CD4-positive, alpha-beta T cell (primary cell): ENCODE measurements at regions of chr17 and their contacts with region 1.

Region 1: GRCh38 chr17:77957857-77958715 is at the start of gene TNRC6C:
- DNase-seq: peak; percentile 99 to 100 (median 100)
- ATAC-seq: peak; percentile 85
- H3K4me3 ChIP-seq: peak within 1 kb of the TSS; percentile 95
- H3K4me3 Mint-ChIP-seq: peak within 1 kb of the TSS; percentile 96
- H3K27ac ChIP-seq: peak within 1 kb of the TSS; percentile 44 to 76
- H3K27ac Mint-ChIP-seq: peak within 1 kb of the TSS; percentile 94
- H3K4me1 ChIP-seq: peaks cover 36% of the 10 kb centered on the region
- H3K4me1 Mint-ChIP-seq: peaks cover 44% of the 10 kb centered on the region
- H3K27me3 ChIP-seq: no peaks in the 10 kb centered on the region
- H3K27me3 Mint-ChIP-seq: no peaks in the 10 kb centered on the region
- CTCF ChIP-seq: no peak
- total RNA-seq, gene TNRC6C: 50.7 to 57.3 TPM

Region 2: GRCh38 chr17:77280980-77281903 is 676.8 kb before region 1 on chr17:
- CTCF ChIA-PET with region 1: no interaction called
- POLR2A ChIA-PET with region 1: no interaction called
- intact Hi-C with region 1: loop called in 1 of 2 experiments (anchors 5 kb)
- DNase-seq: peak; percentile 32 to 89 (median 60)
- ATAC-seq: peak; percentile 92
- H3K4me3 ChIP-seq: peak overlapping the region; percentile 44
- H3K4me3 Mint-ChIP-seq: peak overlapping the region; percentile 88
- H3K27ac ChIP-seq: no peak overlapping the region
- H3K27ac Mint-ChIP-seq: peak overlapping the region; percentile 88
- H3K4me1 ChIP-seq: peaks cover 26% of the 10 kb centered on the region
- H3K4me1 Mint-ChIP-seq: peaks cover 14% of the 10 kb centered on the region
- H3K27me3 ChIP-seq: peaks cover 12 to 21% of the 10 kb centered on the region in 2 experiments
- H3K27me3 Mint-ChIP-seq: peaks cover 15% of the 10 kb centered on the region
- CTCF ChIP-seq: no peak

Region 3: GRCh38 chr17:77609553-77610517 is 348.3 kb before region 1 on chr17:
- CTCF ChIA-PET with region 1: no interaction called
- POLR2A ChIA-PET with region 1: interaction called, 28 read pairs
- intact Hi-C with region 1: loop called in 1 of 2 experiments (anchors 5 kb)
- DNase-seq: peak; percentile 39 to 85 (median 60)
- ATAC-seq: peak; percentile 98
- H3K4me3 ChIP-seq: peak overlapping the region; percentile 32
- H3K4me3 Mint-ChIP-seq: peak overlapping the region; percentile 87
- H3K27ac ChIP-seq: peak overlapping the region; percentile 2 to 54
- H3K27ac Mint-ChIP-seq: peak overlapping the region; percentile 93
- H3K4me1 ChIP-seq: peaks cover 22% of the 10 kb centered on the region
- H3K4me1 Mint-ChIP-seq: peaks cover 27% of the 10 kb centered on the region
- H3K27me3 ChIP-seq: no peaks in the 10 kb centered on the region
- H3K27me3 Mint-ChIP-seq: no peaks in the 10 kb centered on the region
- CTCF ChIP-seq: no peak

Region 4: GRCh38 chr17:77783991-77784820 is 173.9 kb before region 1 on chr17:
- CTCF ChIA-PET with region 1: interaction called, 3 read pairs
- POLR2A ChIA-PET with region 1: interaction called, 51 read pairs
- intact Hi-C with region 1: loop called in 1 of 2 experiments (anchors 1 kb)
- DNase-seq: peak; percentile 51 to 92 (median 64)
- ATAC-seq: peak; percentile 93
- H3K4me3 ChIP-seq: peak overlapping the region; percentile 16
- H3K4me3 Mint-ChIP-seq: peak overlapping the region; percentile 2
- H3K27ac ChIP-seq: peak overlapping the region; percentile 64 to 77
- H3K27ac Mint-ChIP-seq: peak overlapping the region; percentile 96
- H3K4me1 ChIP-seq: peaks cover 28% of the 10 kb centered on the region
- H3K4me1 Mint-ChIP-seq: peaks cover 14% of the 10 kb centered on the region
- H3K27me3 ChIP-seq: no peaks in the 10 kb centered on the region
- H3K27me3 Mint-ChIP-seq: no peaks in the 10 kb centered on the region
- CTCF ChIP-seq: no peak

Region 5: GRCh38 chr17:77852666-77853207 is 105.3 kb before region 1 on chr17:
- CTCF ChIA-PET with region 1: no interaction called
- POLR2A ChIA-PET with region 1: no interaction called
- intact Hi-C with region 1: no loop called
- DNase-seq: peak in 1 of 14 experiments; percentile 7
- ATAC-seq: no peak
- H3K4me3 ChIP-seq: no peak overlapping the region
- H3K4me3 Mint-ChIP-seq: no peak overlapping the region
- H3K27ac ChIP-seq: no peak overlapping the region
- H3K27ac Mint-ChIP-seq: no peak overlapping the region
- H3K4me1 ChIP-seq: peaks cover 27% of the 10 kb centered on the region
- H3K4me1 Mint-ChIP-seq: no peaks in the 10 kb centered on the region
- H3K27me3 ChIP-seq: no peaks in the 10 kb centered on the region
- H3K27me3 Mint-ChIP-seq: no peaks in the 10 kb centered on the region
- CTCF ChIP-seq: no peak

Region 6: DNA sequence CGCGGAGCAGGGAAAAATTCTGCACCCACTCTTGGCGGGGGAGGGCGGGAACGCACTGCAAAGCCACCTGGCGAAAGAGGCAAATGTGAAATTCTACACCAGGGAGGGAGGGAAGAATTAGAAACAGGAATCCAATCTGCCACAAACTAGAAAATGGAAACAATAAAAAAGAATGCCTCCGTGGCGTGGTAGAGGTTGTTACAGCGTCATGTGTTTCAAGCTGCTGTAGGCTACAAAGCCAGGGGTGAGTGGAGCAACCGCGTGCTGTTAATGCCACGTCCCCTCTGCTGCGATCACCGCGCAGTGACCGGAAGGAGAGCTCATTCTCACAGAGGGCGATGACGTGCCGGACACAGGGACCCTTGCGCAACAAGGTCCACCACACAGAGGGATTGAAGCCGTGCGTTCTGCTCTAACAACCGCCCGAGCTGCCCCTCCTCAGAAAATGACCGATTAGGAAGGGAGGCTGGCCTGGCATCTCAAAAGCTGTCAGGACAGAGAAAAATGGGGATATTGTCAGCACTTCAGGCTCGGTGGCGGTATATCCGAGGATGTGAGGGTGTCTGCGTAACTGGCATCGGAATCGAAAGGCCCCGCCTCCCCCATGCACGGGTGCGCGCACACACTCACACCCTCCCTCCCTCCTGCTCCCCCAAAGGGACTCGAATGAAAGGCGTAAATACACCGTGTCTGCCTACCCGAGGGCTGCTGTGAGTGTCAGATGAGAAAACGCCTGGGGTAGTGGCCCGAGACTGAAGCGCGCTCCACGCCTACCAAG is 70.4 kb before region 1 on chr17:
- CTCF ChIA-PET with region 1: interaction called, 4 read pairs
- POLR2A ChIA-PET with region 1: interaction called, 120 read pairs
- intact Hi-C with region 1: loop called (anchors 1 to 2 kb)
- DNase-seq: peak; percentile 68 to 94 (median 80)
- ATAC-seq: peak; percentile 93
- H3K4me3 ChIP-seq: peak overlapping the region; percentile 67
- H3K4me3 Mint-ChIP-seq: peak overlapping the region; percentile 95
- H3K27ac ChIP-seq: peak overlapping the region; percentile 89 to 93
- H3K27ac Mint-ChIP-seq: peak overlapping the region; percentile 99
- H3K4me1 ChIP-seq: peaks cover 57% of the 10 kb centered on the region
- H3K4me1 Mint-ChIP-seq: peaks cover 53% of the 10 kb centered on the region
- H3K27me3 ChIP-seq: no peaks in the 10 kb centered on the region
- H3K27me3 Mint-ChIP-seq: no peaks in the 10 kb centered on the region
- CTCF ChIP-seq: no peak

Region 7: GRCh38 chr17:77999413-78000173 is 41.5 kb after region 1 on chr17:
- CTCF ChIA-PET with region 1: interaction called, 5 read pairs
- POLR2A ChIA-PET with region 1: interaction called, 29 read pairs
- intact Hi-C with region 1: loop called in 1 of 2 experiments (anchors 2 kb)
- DNase-seq: no peak
- ATAC-seq: no peak
- H3K4me3 ChIP-seq: no peak overlapping the region
- H3K4me3 Mint-ChIP-seq: no peak overlapping the region
- H3K27ac ChIP-seq: no peak overlapping the region
- H3K27ac Mint-ChIP-seq: peak overlapping the region; percentile 45
- H3K4me1 ChIP-seq: peaks cover 34% of the 10 kb centered on the region
- H3K4me1 Mint-ChIP-seq: peaks cover 95% of the 10 kb centered on the region
- H3K27me3 ChIP-seq: no peaks in the 10 kb centered on the region
- H3K27me3 Mint-ChIP-seq: no peaks in the 10 kb centered on the region
- CTCF ChIP-seq: no peak

Region 8: DNA sequence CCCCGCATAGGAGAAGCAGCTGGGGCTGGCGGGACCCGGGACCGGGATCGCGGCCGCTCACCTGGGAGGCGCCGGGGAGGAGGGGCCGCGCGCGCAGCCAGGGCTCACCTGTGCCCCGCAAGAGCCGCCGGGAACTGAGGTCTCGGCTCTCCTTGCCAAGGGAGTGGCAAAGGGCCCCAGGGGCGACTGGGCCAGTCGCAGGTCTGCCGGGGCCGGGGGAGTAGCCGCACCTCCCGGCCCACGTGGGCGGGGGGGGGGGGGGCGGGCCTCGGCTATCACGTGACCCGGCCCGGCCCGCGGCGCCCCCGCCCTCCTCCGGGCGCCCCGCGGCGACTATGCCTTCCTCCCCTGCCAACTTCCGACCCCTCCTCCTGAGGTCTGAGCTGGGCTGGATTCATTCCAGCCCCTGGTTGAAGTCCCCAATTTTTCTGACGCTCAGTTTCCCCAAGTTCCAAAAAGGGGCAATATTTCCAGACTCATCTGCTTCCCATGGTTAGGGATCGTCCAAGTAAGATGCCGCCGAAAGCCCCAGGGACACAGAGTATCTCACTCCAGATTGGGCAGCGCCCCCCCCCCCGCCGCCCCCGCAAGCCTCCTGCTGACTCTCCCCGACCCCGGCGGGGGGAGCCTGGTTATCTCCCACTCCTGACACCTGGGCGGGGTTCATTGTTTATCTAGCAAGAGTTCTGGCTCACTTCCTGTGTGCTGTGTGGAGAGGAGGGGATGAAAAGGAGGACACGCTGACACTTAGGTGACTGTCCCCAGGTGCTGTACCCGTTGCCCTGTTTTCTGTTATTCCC is 170.7 kb after region 1 on chr17 and contains the start of gene TMC6:
- CTCF ChIA-PET with region 1: no interaction called
- POLR2A ChIA-PET with region 1: interaction called, 44 read pairs
- intact Hi-C with region 1: no loop called
- DNase-seq: peak; percentile 58 to 89 (median 75)
- ATAC-seq: peak; percentile 43
- H3K4me3 ChIP-seq: peak within 1 kb of the TSS; percentile 94
- H3K4me3 Mint-ChIP-seq: peak within 1 kb of the TSS; percentile 100
- H3K27ac ChIP-seq: peak within 1 kb of the TSS; percentile 75 to 92
- H3K27ac Mint-ChIP-seq: peak within 1 kb of the TSS; percentile 96
- H3K4me1 ChIP-seq: peaks cover 76% of the 10 kb centered on the region
- H3K4me1 Mint-ChIP-seq: peaks cover 56% of the 10 kb centered on the region
- H3K27me3 ChIP-seq: no peaks in the 10 kb centered on the region
- H3K27me3 Mint-ChIP-seq: no peaks in the 10 kb centered on the region
- CTCF ChIP-seq: no peak
- total RNA-seq, gene TMC6: 645 to 659 TPM

Region 9: DNA sequence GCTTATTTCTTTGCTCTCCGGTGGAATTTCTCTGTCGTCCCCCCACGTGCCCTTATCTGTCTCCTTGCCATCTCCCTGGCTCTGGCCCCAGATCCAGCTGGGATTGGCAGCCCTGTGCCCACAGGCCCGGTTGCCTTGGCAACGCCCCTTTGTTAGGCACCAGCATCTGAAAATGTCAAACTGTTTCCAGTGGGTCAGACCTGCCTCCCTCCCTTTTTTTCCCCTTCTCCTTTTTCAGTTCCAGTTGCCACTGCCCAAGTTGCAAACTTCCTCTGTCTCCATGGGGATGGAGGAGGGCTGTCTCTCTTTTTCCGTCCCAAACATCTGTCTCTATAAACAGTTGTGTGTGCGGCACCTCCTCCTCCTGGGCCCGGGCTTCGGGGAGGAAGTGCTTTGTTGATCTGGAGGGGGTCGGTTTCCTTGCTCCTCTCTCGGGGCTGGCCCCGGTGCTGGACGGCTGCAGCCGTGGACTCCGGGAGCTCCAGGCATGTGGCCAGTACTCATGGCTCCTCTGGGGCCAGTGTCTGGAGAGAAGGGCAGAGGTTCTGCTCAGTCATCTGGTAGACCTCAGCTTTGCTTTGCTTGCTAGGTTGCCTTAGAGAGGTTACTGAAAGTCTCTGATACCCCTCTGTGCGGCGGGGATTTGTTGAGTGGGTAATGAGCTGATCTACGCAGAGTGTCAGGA is 366.4 kb after region 1 on chr17:
- CTCF ChIA-PET with region 1: no interaction called
- POLR2A ChIA-PET with region 1: no interaction called
- intact Hi-C with region 1: no loop called
- DNase-seq: peak in 4 of 14 experiments; percentile 30 to 46 (median 42)
- ATAC-seq: peak; percentile 76
- H3K4me3 ChIP-seq: no peak overlapping the region
- H3K4me3 Mint-ChIP-seq: peak overlapping the region; percentile 36
- H3K27ac ChIP-seq: no peak overlapping the region
- H3K27ac Mint-ChIP-seq: peak overlapping the region; percentile 65
- H3K4me1 ChIP-seq: peaks cover 35% of the 10 kb centered on the region
- H3K4me1 Mint-ChIP-seq: peaks cover 22% of the 10 kb centered on the region
- H3K27me3 ChIP-seq: no peaks in the 10 kb centered on the region
- H3K27me3 Mint-ChIP-seq: no peaks in the 10 kb centered on the region
- CTCF ChIP-seq: no peak